ENCODE measurements at regions of chr14 and their contacts with region 1.

Region 1: GRCh38 chr14:94036313-94037050 is 10.3 kb downstream of the OTUB2 start:
- DNase-seq: peak; percentile 90
- ATAC-seq: peak; percentile 100
- H3K4me3 Mint-ChIP-seq: no peak overlapping the region
- H3K27ac Mint-ChIP-seq: no peak overlapping the region
- H3K4me1 Mint-ChIP-seq: peaks cover 4% of the 10 kb centered on the region
- H3K27me3 Mint-ChIP-seq: no peaks in the 10 kb centered on the region
- CTCF ChIP-seq: peak; percentile 77

Region 2: GRCh38 chr14:94009767-94010166 is 26.7 kb before region 1 on chr14:
- CTCF ChIA-PET with region 1: interaction called, 11 read pairs
- POLR2A ChIA-PET with region 1: no interaction called
- intact Hi-C with region 1: no loop called
- DNase-seq: peak; percentile 29
- ATAC-seq: peak; percentile 22
- H3K4me3 Mint-ChIP-seq: no peak overlapping the region
- H3K27ac Mint-ChIP-seq: no peak overlapping the region
- H3K4me1 Mint-ChIP-seq: peaks cover 34% of the 10 kb centered on the region
- H3K27me3 Mint-ChIP-seq: peaks cover 11% of the 10 kb centered on the region
- CTCF ChIP-seq: no peak

Region 3: DNA sequence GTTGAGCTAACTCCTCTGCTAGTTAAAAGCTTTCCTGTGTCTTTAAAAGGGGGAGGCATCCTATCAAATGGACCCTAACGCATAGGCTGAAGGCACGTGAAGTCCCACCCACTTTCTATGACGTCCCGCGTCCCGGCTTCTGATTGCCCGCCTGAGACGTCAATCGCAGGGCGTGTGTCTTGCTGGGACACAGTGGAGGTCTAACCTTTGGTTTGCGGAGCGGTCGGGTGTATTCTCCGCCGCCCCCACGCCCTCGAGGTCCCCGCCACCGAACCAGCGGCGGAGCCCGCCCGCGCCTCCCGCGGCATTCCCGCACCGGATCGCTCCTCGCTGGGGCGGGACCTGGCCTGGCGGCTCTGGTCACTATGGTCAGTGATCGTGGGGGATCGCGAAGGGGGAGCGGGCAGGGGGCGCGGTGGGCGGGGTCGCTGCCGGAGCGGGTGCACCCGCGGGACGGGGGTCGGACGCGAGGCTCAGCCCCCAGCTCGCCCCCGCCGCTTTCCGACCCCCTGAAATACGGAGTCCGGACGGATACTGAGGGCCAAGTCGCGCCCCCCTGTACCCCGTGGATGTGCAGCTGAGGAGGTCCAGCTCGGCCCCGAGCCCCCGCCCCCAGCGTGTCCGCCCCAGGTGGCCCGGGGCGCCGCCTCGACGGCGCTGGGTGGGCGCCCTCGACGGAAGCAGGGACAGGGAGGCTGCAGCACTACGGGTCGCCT is 10.2 kb before region 1 on chr14 and contains the start of gene OTUB2:
- CTCF ChIA-PET with region 1: interaction called, 23 read pairs
- POLR2A ChIA-PET with region 1: interaction called, 3 read pairs
- intact Hi-C with region 1: no loop called
- DNase-seq: peak; percentile 98
- ATAC-seq: peak; percentile 96
- H3K4me3 Mint-ChIP-seq: peak within 1 kb of the TSS; percentile 42
- H3K27ac Mint-ChIP-seq: no peak within 1 kb of the TSS
- H3K4me1 Mint-ChIP-seq: peaks cover 40% of the 10 kb centered on the region
- H3K27me3 Mint-ChIP-seq: peaks cover 1% of the 10 kb centered on the region
- CTCF ChIP-seq: no peak
- total RNA-seq, gene OTUB2: 0.25 to 0.29 TPM

Region 4: DNA sequence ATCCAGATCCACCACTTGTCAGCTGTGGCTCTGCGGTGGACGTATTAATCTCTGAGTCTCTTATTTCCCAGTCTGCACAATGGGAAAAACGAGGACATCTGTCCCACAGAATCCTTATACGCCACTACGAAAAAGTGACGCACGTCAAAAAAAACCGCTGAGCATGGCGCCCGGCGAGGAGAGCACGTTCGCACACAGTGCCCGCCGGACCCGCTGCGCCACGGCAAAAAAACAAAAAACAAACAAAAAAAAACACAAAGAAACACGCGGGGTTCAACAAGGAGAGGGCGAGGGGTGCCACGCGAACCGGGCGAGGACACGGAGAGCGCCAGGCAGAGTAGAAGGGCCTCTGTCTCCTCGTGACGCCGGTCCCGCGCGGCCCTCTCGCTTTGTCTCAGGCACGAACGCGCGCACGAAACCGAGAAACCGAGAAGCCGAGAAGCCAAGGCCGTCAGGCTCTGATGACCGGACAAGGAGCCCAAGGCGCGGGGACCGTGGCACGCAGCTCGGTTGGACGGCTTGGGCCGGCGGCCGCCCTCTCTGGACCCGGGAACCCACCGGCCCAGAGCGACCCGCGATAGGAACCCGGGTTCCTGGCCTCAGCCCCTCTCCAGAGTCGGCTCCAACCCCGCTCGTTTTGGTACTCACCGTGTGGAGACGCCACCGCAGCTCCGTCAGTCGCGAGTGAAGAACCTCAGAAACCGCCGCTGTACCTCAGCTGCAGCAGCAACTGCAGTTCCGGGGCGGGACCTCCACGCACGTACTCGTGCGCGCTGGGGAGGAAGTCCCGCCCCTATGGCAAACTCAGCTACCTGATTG is 44.2 kb after region 1 on chr14 and contains the start of gene DDX24:
- CTCF ChIA-PET with region 1: interaction called, 22 read pairs
- POLR2A ChIA-PET with region 1: interaction called, 3 read pairs
- intact Hi-C with region 1: no loop called
- DNase-seq: peak; percentile 98
- ATAC-seq: peak; percentile 98
- H3K4me3 Mint-ChIP-seq: peak within 1 kb of the TSS; percentile 98
- H3K27ac Mint-ChIP-seq: peak within 1 kb of the TSS; percentile 99
- H3K4me1 Mint-ChIP-seq: peaks cover 44% of the 10 kb centered on the region
- H3K27me3 Mint-ChIP-seq: no peaks in the 10 kb centered on the region
- CTCF ChIP-seq: no peak
- total RNA-seq, gene DDX24: 272 to 275 TPM

Region 5: GRCh38 chr14:94100847-94101246 is 64.4 kb after region 1 on chr14:
- CTCF ChIA-PET with region 1: no interaction called
- POLR2A ChIA-PET with region 1: no interaction called
- intact Hi-C with region 1: no loop called
- DNase-seq: no peak
- ATAC-seq: no peak
- H3K4me3 Mint-ChIP-seq: no peak overlapping the region
- H3K27ac Mint-ChIP-seq: no peak overlapping the region
- H3K4me1 Mint-ChIP-seq: no peaks in the 10 kb centered on the region
- H3K27me3 Mint-ChIP-seq: no peaks in the 10 kb centered on the region
- CTCF ChIP-seq: no peak

Region 6: GRCh38 chr14:94143239-94143638 is 106.8 kb after region 1 on chr14:
- CTCF ChIA-PET with region 1: interaction called, 115 read pairs
- POLR2A ChIA-PET with region 1: no interaction called
- intact Hi-C with region 1: no loop called
- DNase-seq: peak; percentile 34
- ATAC-seq: peak; percentile 64
- H3K4me3 Mint-ChIP-seq: no peak overlapping the region
- H3K27ac Mint-ChIP-seq: no peak overlapping the region
- H3K4me1 Mint-ChIP-seq: peaks cover 16% of the 10 kb centered on the region
- H3K27me3 Mint-ChIP-seq: peaks cover 1% of the 10 kb centered on the region
- CTCF ChIP-seq: peak; percentile 54

Region 7: DNA sequence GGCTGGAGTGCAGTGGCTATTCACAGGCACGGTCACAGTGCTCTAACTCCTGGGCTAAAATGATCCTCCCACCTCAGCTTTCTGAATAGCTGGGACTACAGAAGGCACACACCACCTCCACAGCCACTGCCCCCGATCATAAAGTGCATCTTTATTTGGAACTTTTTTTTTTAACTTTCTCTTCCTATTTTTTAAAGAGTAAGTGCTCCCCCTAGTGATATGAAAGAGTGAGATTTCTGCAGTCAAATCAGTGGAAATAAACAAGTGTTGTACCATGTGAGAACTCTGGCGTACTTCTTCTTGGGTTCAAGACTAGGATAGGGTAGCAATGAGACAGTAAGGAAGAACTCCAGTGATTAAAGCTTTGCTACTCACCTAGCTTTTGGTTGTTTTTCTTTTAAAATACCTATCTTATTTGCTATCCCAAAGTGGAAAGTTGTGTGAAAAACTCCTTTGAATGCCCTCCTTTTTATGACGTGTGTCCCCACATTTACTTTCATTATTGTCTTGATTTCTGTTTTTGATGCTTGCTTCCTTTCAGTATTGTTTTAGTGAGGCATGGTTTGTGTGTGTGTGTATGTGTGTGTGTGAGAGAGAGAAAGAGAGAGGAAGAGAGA is 144.3 kb after region 1 on chr14:
- CTCF ChIA-PET with region 1: interaction called, 47 read pairs
- POLR2A ChIA-PET with region 1: no interaction called
- intact Hi-C with region 1: loop called (anchors 1 kb)
- DNase-seq: no peak
- ATAC-seq: peak; percentile 81
- H3K4me3 Mint-ChIP-seq: peak overlapping the region; percentile 47
- H3K27ac Mint-ChIP-seq: peak overlapping the region; percentile 5
- H3K4me1 Mint-ChIP-seq: peaks cover 13% of the 10 kb centered on the region
- H3K27me3 Mint-ChIP-seq: peaks cover 19% of the 10 kb centered on the region
- CTCF ChIP-seq: peak; percentile 73

Measured in activated CD8-positive, alpha-beta T cell treated with anti-CD3 and anti-CD28 coated beads for 36 hours (primary cell).